ENCODE measurements at regions of chr12 and their contacts with region 1.

Region 1: GRCh38 chr12:64780531-64781279 is 21.5 kb upstream of the GNS start:
- DNase-seq: peak in 2 of 5 donors; percentile 7 to 19
- H3K4me3 ChIP-seq: peak overlapping the region in 1 of 2 donors; percentile 37
- H3K4me3 Mint-ChIP-seq: peak overlapping the region; percentile 70 to 96 (median 80)
- H3K27ac ChIP-seq: no peak overlapping the region
- H3K27ac Mint-ChIP-seq: no peak overlapping the region
- H3K4me1 ChIP-seq: peaks cover 19% of the 10 kb centered on the region
- H3K4me1 Mint-ChIP-seq: peaks cover 12 to 25% (median 19%) of the 10 kb centered on the region in 4 donors
- H3K27me3 ChIP-seq: peaks cover 27% of the 10 kb centered on the region
- H3K27me3 Mint-ChIP-seq: peaks cover 55 to 64% of the 10 kb centered on the region in 2 donors

Region 2: DNA sequence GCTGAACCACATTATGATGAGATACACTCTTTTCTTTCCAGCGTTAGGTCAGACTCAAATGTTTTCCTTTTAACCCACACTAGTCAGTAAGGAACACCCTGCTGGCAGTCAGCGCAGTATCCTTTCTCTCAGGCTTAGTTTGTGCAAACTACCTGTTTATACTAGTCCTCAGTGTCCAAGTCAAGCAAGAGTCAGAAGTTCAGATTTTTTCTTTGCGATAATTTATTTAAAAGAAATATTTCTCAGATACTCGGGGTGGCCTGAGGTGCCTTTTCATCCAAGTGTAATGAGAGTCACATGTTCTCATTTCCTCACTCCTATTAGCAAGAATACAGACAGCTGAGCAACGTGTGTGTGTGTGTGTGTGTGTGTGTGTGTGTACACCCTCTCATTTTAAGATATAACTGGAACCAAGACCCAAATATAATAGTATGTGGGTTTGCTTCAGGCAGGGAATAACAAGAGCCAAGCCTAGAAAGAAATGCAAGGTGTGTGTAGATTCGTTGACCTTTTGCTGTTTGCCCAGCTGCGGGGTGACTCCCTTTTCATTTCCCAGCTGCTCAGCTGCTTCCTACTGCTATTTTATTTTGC is 741.3 kb before region 1 on chr12:
- CTCF ChIA-PET with region 1: no interaction called
- POLR2A ChIA-PET with region 1: no interaction called
- intact Hi-C with region 1: no loop called
- DNase-seq: no peak
- H3K4me3 ChIP-seq: no peak overlapping the region
- H3K4me3 Mint-ChIP-seq: no peak overlapping the region
- H3K27ac ChIP-seq: no peak overlapping the region
- H3K27ac Mint-ChIP-seq: no peak overlapping the region
- H3K4me1 ChIP-seq: no peaks in the 10 kb centered on the region
- H3K4me1 Mint-ChIP-seq: no peaks in the 10 kb centered on the region
- H3K27me3 ChIP-seq: no peaks in the 10 kb centered on the region
- H3K27me3 Mint-ChIP-seq: peaks cover 0 to 2% of the 10 kb centered on the region in 2 donors

Region 3: DNA sequence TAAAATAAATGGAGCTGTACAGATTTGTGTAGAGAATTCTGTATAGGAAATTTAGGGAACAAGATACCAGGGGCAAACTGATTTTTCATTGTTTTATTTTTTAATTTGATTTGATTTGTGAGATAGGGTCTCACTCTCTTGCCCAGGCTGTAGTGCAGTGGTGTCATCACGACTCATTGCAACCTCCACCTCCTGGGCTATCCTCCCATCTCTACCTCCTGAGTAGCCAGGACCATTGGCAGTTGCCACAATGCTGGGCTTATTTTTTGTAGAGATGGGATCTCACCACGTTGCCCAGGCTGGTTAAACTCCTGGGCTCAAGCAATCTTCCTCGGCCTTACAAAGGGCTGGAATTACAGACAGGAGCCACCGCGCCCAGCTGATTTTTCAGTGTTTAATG is 346.8 kb before region 1 on chr12:
- CTCF ChIA-PET with region 1: no interaction called
- POLR2A ChIA-PET with region 1: no interaction called
- intact Hi-C with region 1: no loop called
- DNase-seq: no peak
- H3K4me3 ChIP-seq: no peak overlapping the region
- H3K4me3 Mint-ChIP-seq: no peak overlapping the region
- H3K27ac ChIP-seq: no peak overlapping the region
- H3K27ac Mint-ChIP-seq: peak overlapping the region in 1 of 7 donors; percentile 17
- H3K4me1 ChIP-seq: no peaks in the 10 kb centered on the region
- H3K4me1 Mint-ChIP-seq: peaks cover 0 to 6% (median 2%) of the 10 kb centered on the region in 4 donors
- H3K27me3 ChIP-seq: no peaks in the 10 kb centered on the region
- H3K27me3 Mint-ChIP-seq: no peaks in the 10 kb centered on the region

Region 4: GRCh38 chr12:64767495-64767894 is 13.2 kb before region 1 on chr12:
- CTCF ChIA-PET with region 1: interaction called, 14 read pairs
- POLR2A ChIA-PET with region 1: no interaction called
- intact Hi-C with region 1: no loop called
- DNase-seq: no peak
- H3K4me3 ChIP-seq: no peak overlapping the region
- H3K4me3 Mint-ChIP-seq: no peak overlapping the region
- H3K27ac ChIP-seq: no peak overlapping the region
- H3K27ac Mint-ChIP-seq: no peak overlapping the region
- H3K4me1 ChIP-seq: no peaks in the 10 kb centered on the region
- H3K4me1 Mint-ChIP-seq: peaks cover 0 to 2% (median 0%) of the 10 kb centered on the region in 4 donors
- H3K27me3 ChIP-seq: no peaks in the 10 kb centered on the region
- H3K27me3 Mint-ChIP-seq: peaks cover 7% of the 10 kb centered on the region in 2 donors

Measured in CD4-positive, alpha-beta memory T cell (primary cell).